ENCODE measurements at regions of chr2 and their contacts with region 1.

Region 1: DNA sequence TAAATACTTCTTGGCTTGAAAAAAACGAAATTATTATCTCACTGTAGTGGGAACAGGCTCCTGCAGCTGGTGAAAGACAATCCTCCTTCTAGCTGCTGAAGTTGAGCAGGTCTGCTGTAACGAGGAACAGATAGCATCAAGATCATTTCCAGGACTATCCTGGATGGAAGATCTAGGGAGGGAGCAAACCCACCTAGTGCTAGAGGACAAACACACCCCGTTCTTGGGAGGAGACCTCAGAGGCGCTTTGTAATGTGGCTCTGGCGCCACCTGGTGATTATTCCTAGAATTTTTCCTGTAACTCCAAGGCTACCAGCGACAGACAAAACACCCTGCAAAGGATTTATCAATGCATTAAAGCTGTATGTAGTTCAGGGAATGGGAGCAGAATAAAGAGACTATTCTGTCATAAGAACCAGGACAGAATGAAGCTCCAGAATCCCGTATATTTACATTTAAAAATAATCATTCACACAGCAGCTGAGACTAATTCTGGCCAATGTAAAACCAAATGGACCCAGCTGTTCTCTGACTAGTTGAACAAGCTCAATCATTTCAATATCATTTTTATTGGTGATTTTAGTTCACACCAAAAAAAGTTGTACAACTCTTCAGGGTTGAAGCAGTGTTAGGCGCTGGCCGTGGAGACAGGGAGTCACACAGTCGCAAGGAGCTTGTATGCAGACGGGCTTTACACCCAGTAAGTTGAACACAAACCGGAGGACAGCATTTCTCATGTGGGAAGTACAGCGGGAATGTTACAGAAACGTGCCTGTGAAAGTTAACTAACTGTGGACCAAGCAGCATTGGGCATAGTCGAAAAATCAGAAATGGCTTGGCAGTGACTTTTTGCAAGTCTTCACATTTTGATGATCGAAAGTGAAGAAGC is 290.3 kb downstream of the TRIB2 start:
- DNase-seq: peak; percentile 40
- H3K4me3 Mint-ChIP-seq: no peak overlapping the region
- H3K27ac Mint-ChIP-seq: no peak overlapping the region
- H3K4me1 Mint-ChIP-seq: peaks cover 3% of the 10 kb centered on the region
- H3K27me3 Mint-ChIP-seq: peaks cover 48% of the 10 kb centered on the region

Region 2: GRCh38 chr2:11863513-11864328 is 1143.4 kb before region 1 on chr2:
- intact Hi-C with region 1: loop called (anchors 1 kb)
- DNase-seq: peak; percentile 47
- H3K4me3 Mint-ChIP-seq: no peak overlapping the region
- H3K27ac Mint-ChIP-seq: no peak overlapping the region
- H3K4me1 Mint-ChIP-seq: peaks cover 9% of the 10 kb centered on the region
- H3K27me3 Mint-ChIP-seq: peaks cover 13% of the 10 kb centered on the region